Cardiac septum (tissue), 1 donor: ENCODE measurements at regions of chrX and their contacts with region 1.

Region 1: DNA sequence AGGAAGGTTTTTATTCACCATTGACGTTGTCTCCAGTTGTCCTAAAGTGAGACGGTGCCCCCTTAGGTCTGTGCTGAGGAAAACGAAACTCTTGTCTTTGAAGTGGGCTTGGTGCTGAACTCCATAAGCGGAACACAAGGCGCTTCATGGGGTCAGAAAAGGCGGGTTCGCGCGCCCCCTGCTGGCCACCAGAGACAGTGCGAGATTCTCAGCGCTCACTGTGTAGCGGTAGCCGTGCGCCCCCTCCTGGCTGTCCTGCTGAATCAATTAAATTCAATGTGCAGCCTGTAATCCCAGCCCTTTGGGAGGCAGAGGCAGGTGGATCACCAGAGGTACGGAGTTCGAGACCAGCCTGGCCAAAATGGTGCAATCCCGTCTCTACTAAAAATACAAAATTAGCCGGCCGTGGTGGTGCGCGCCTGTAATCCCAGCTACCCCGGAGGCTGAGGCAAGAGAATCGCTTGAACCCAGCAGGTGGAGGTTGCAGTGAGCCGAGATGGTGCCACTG is 64.1 kb downstream of the RLIM start:
- DNase-seq: peak; percentile 92

Region 2: DNA sequence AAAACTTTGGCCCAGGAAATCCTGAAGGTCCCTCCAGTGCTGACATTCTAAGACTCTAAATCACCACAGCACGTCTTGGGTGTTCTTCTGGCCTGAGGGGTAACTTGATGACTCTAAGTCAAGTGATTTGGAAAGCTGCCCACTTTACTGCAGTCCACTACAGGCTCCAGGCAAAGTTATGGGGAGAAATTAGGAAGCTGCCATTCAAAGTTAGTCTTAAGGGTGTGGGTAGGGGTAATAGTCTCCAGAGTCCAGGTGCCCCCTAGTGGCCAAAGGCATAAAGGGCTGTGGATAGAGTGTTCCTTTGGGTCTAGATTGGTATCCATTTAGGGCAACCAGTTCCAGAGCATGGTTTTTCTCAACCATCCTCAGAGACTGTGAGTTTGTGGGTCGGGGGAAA is 167.7 kb before region 1 on chrX:
- intact Hi-C with region 1: loop called (anchors 1 kb)
- DNase-seq: no peak